T-cell (primary cell): ENCODE measurements at regions of chrX and their contacts with region 1.

Region 1: GRCh38 chrX:120603707-120604360 is at the start of gene MCTS1:
- DNase-seq: peak; percentile 50 to 88 (median 73)
- ATAC-seq: peak; percentile 90 to 96 (median 91)
- H3K4me3 ChIP-seq: peak within 1 kb of the TSS; percentile 61 to 87
- H3K4me3 Mint-ChIP-seq: peak within 1 kb of the TSS; percentile 93 to 99 (median 97)
- H3K27ac ChIP-seq: peak within 1 kb of the TSS; percentile 88
- H3K27ac Mint-ChIP-seq: peak within 1 kb of the TSS; percentile 95 to 99
- H3K4me1 ChIP-seq: peaks cover 6 to 11% of the 10 kb centered on the region in 2 experiments
- H3K4me1 Mint-ChIP-seq: peaks cover 9 to 14% (median 14%) of the 10 kb centered on the region in 3 donors
- H3K27me3 ChIP-seq: no peaks in the 10 kb centered on the region
- H3K27me3 Mint-ChIP-seq: no peaks in the 10 kb centered on the region
- total RNA-seq, gene MCTS1: 18.9 to 27.2 (median 25.3) TPM

Region 2: GRCh38 chrX:120457766-120458180 is 146.1 kb before region 1 on chrX:
- CTCF ChIA-PET with region 1: no interaction called
- POLR2A ChIA-PET with region 1: no interaction called
- DNase-seq: peak in 1 of 35 experiments; percentile 22
- ATAC-seq: peak; percentile 54 to 83 (median 70)
- H3K4me3 ChIP-seq: no peak overlapping the region
- H3K4me3 Mint-ChIP-seq: peak overlapping the region in 1 of 3 donors; percentile 55
- H3K27ac ChIP-seq: peak overlapping the region; percentile 11
- H3K27ac Mint-ChIP-seq: peak overlapping the region; percentile 73 to 76
- H3K4me1 ChIP-seq: peaks cover 9 to 17% of the 10 kb centered on the region in 2 experiments
- H3K4me1 Mint-ChIP-seq: peaks cover 37 to 67% (median 45%) of the 10 kb centered on the region in 3 donors
- H3K27me3 ChIP-seq: no peaks in the 10 kb centered on the region
- H3K27me3 Mint-ChIP-seq: no peaks in the 10 kb centered on the region

Region 3: DNA sequence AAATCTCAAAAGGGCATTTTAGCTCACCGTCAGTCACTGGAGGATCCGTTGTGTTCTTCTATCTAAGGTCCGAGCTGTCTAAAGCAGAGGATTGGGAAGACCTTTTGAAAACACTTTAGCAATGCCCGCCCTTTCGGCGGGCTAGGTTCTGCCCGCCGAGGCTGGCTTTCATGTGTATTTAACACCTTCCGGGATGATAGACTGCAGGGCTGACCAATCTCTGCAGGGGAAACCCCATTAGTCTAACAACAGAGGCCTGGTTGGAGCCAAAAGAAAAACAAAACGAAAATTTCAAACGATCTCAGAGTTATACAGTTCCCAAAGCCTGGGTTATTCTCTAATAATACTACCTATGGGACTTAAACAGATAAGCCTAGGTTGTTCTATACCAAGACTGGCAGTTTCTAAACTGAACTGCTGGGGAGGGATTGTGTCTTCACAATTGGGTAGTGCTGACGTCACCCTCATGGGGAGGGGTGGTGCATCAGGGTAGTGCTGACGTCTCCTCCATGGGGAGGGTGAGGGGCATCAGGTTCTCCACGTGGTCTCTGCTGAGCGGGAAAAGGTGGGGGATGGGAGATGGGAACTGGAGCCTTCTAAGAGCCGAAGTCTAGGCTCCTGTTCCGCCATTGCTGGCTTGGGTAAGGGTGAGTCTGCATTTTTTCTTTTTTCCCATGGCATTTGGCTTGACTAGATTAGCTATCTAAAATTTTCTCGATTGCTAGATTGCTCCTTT is 28.3 kb before region 1 on chrX:
- CTCF ChIA-PET with region 1: no interaction called
- POLR2A ChIA-PET with region 1: interaction called in 1 of 2 experiments, 11 read pairs
- DNase-seq: no peak
- ATAC-seq: no peak
- H3K4me3 ChIP-seq: no peak overlapping the region
- H3K4me3 Mint-ChIP-seq: no peak overlapping the region
- H3K27ac ChIP-seq: no peak overlapping the region
- H3K27ac Mint-ChIP-seq: no peak overlapping the region
- H3K4me1 ChIP-seq: peaks cover 2 to 3% of the 10 kb centered on the region in 2 experiments
- H3K4me1 Mint-ChIP-seq: peaks cover 4 to 9% (median 8%) of the 10 kb centered on the region in 3 donors
- H3K27me3 ChIP-seq: no peaks in the 10 kb centered on the region
- H3K27me3 Mint-ChIP-seq: peaks cover 7 to 21% of the 10 kb centered on the region in 2 donors